Activated T-helper 1 cell treated with anti-CD3 and anti-CD28 coated beads, Interleukin-12 subunit alpha, Interleukin-12 subunit beta, Interleukin-2, Interleukin-4 antibody, amounts not matched to agents 30 ng/mL and 10 ng/mL and 1 ng/mL, durations not matched to agents 14 hours and 24 hours and 36 hours (primary cell): ENCODE measurements at regions of chr19 and their contacts with region 1.

Region 1: GRCh38 chr19:40872209-40872608 is 9.8 kb downstream of the CYP2A7 start:
- DNase-seq: no peak
- H3K4me3 Mint-ChIP-seq: no peak overlapping the region
- H3K27ac Mint-ChIP-seq: no peak overlapping the region
- H3K4me1 Mint-ChIP-seq: peaks cover 14% of the 10 kb centered on the region
- H3K27me3 Mint-ChIP-seq: peaks cover 28% of the 10 kb centered on the region

Region 2: DNA sequence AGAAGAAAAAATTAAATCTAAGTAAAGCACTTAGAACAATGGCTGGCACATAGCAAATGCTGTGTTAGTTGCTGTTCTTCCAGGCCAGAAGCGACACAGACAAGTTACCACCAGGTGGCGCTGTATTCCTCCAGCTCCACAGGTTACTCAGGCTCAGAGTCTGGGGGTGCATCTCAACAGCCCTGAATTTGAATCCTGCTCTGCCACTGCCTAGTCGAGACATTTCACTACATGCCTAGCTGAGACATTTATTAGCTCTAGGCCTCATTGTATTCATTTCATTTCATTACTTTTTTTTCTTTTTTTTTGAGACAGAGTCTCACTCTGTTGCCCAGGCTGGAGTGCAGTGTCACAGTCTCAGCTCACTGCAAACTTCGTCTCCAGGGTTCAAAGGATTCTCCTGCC is 102.4 kb after region 1 on chr19:
- intact Hi-C with region 1: loop called (anchors 1 kb)
- DNase-seq: peak; percentile 62
- H3K4me3 Mint-ChIP-seq: peak overlapping the region; percentile 24
- H3K27ac Mint-ChIP-seq: no peak overlapping the region
- H3K4me1 Mint-ChIP-seq: peaks cover 48% of the 10 kb centered on the region
- H3K27me3 Mint-ChIP-seq: peaks cover 4% of the 10 kb centered on the region